ENCODE measurements at regions of chr7 and their contacts with region 1.

Region 1: DNA sequence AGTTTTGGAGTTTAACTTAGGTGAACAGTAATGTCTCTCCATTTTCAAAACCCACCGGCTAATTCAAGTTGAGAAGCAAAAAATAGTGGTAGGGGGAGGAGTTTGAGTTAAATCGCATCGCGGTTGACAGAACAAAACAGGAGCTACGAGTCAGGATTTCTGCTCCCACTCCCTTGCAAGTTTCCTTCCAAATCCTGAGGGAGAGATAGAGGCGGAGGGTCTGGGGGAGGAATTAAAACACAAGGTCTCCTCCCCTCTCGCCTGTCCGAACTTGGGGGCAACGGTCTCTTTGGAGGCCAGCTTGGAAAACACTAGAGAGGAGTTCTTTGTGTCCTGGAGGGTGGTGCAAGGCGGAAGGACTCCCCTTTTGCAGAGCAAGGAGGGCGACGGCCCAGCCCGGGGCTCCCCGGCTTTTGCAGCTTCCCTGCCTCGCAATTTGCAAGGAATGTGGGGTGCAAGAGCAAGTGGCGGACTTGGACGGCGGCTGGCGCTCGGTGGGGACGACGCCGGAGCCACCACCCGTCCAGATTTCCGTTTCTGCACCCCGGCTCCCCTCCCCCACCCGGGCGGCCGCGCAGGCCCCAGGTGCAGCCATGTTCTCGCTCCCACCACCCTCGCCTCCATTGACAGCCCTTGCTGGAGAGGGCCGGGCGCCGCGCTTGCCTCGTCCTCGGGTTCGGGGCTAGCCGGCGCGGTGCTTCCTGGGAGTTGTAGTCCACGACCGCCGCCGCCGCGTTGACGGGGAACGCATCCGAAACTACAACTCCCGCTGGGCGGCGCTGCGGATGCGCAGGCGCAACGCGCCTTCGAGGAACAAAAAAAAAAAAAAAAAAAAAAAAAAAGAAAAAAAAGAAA is 454 bp upstream of the GTF2I start:
- DNase-seq: peak; percentile 92
- H3K4me3 ChIP-seq: peak overlapping the region; percentile 73
- H3K27ac ChIP-seq: peak overlapping the region; percentile 89
- H3K27me3 ChIP-seq: no peaks in the 10 kb centered on the region
- CTCF ChIP-seq: peak; percentile 29

Region 2: GRCh38 chr7:74379938-74380337 is 277.1 kb before region 1 on chr7:
- CTCF ChIA-PET with region 1: no interaction called
- POLR2A ChIA-PET with region 1: no interaction called
- DNase-seq: no peak
- H3K4me3 ChIP-seq: no peak overlapping the region
- H3K27ac ChIP-seq: no peak overlapping the region
- H3K27me3 ChIP-seq: no peaks in the 10 kb centered on the region
- CTCF ChIP-seq: no peak

Region 3: DNA sequence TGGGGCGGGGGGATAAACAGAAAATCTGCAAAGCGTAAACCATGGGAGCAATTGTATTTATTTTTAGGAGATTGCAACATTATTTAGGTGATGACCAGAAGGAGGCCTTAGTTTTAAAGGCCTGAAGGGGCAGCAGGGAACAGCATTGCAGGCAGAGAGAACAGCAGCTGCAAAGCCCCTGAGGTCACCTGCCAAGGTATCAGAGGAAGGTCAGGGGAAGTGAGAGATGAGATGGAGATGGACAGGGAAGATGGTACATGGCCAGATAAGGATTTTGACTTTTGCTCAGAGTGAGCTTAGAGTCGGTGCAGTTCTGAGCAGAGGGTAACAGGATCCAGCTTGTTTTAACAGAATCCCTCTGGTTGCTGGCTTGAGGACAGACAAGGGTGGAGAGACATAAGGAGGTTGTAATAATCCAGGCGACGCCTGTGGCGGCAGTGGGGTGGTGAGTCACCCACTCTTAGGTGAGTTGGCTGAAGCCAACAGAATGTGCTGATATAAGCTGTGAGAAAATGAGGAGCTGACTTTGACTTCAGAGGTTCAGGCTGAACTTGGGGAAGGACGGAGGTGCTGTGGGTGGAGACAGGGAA is 81.8 kb before region 1 on chr7:
- CTCF ChIA-PET with region 1: no interaction called
- POLR2A ChIA-PET with region 1: no interaction called
- DNase-seq: no peak
- H3K4me3 ChIP-seq: no peak overlapping the region
- H3K27ac ChIP-seq: no peak overlapping the region
- H3K27me3 ChIP-seq: no peaks in the 10 kb centered on the region
- CTCF ChIP-seq: no peak

Region 4: GRCh38 chr7:74627661-74628411 is 29.2 kb before region 1 on chr7:
- CTCF ChIA-PET with region 1: no interaction called
- POLR2A ChIA-PET with region 1: interaction called, 11 read pairs
- DNase-seq: peak; percentile 21
- H3K4me3 ChIP-seq: no peak overlapping the region
- H3K27ac ChIP-seq: no peak overlapping the region
- H3K27me3 ChIP-seq: no peaks in the 10 kb centered on the region
- CTCF ChIP-seq: no peak

Region 5: DNA sequence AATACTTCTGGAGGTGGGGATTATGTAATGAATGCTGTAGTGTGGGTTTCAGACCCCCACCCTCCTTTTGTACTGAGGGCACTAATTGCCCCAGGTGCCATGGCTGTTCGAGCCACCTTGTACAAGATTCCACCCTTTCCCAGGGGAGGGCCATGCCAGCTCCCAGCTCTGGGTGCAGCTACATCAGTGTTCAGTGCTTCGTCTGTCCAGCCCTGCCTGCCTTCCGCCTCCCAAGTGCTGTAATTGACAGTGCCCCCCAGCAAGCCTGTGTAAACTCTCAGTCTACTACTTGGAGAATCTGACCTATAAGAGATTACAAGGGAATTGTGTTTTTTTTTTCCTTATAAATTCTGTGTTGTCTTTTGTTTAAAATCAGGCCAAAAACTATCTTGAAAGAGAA is 33.4 kb after region 1 on chr7:
- CTCF ChIA-PET with region 1: no interaction called
- POLR2A ChIA-PET with region 1: interaction called, 11 read pairs
- DNase-seq: no peak
- H3K4me3 ChIP-seq: no peak overlapping the region
- H3K27ac ChIP-seq: no peak overlapping the region
- H3K27me3 ChIP-seq: no peaks in the 10 kb centered on the region
- CTCF ChIP-seq: no peak